Naive thymus-derived CD4-positive, alpha-beta T cell (primary cell): ENCODE measurements at regions of chr2 and their contacts with region 1.

Region 1: DNA sequence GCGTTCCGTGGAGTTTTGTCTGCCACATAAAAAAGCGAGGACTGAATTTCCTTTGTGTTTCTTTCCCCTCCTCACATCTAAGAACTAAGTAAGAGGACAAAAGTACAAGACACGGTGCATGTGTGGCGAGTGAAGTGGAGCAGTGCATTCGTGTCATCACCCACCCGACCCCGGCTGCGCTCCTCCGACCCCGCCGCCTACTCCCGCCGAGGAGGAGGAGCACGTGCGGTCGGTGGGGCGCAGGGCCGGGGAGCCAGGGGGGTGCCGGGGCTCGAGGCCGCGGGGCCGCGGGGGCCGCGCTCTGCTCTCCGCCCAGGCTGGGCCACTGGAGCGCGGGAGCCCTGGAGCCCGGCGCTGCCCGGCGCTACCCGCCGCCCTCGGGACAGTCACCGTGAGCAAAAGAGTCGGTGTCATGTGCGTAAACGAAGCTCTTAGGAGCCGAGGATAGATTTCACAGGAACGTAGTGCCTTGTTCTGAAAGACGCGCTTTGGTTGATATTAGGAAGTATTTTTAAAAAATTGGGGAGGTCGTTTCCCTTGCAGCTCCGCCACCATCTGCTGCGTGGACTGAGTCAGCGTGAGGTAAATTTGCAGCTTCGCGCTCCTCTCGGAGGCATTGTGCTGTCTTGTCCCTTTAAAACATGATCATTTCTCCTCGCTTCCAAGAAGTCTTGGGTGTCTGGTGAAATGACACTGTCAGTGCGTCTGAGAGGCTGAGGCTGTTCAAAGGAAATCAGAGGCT is 11.0 kb downstream of the TBR1 start:
- DNase-seq: peak in 1 of 9 donors; percentile 36
- ATAC-seq: peak; percentile 19
- H3K4me3 ChIP-seq: peak overlapping the region; percentile 8
- H3K4me3 Mint-ChIP-seq: peak overlapping the region; percentile 44 to 82 (median 72)
- H3K27ac ChIP-seq: no peak overlapping the region
- H3K27ac Mint-ChIP-seq: peak overlapping the region in 1 of 9 donors; percentile 68
- H3K4me1 ChIP-seq: peaks cover 5 to 21% of the 10 kb centered on the region in 2 donors
- H3K4me1 Mint-ChIP-seq: peaks cover 14 to 44% (median 31%) of the 10 kb centered on the region in 7 donors
- H3K27me3 ChIP-seq: peaks cover 27 to 70% of the 10 kb centered on the region in 2 donors
- H3K27me3 Mint-ChIP-seq: peaks cover 74 to 89% (median 82%) of the 10 kb centered on the region in 5 donors

Region 2: GRCh38 chr2:161265874-161266273 is 161.2 kb before region 1 on chr2:
- CTCF ChIA-PET with region 1: no interaction called
- POLR2A ChIA-PET with region 1: no interaction called
- intact Hi-C with region 1: no loop called
- DNase-seq: no peak
- ATAC-seq: no peak
- H3K4me3 ChIP-seq: no peak overlapping the region
- H3K4me3 Mint-ChIP-seq: no peak overlapping the region
- H3K27ac ChIP-seq: no peak overlapping the region
- H3K27ac Mint-ChIP-seq: no peak overlapping the region
- H3K4me1 ChIP-seq: no peaks in the 10 kb centered on the region
- H3K4me1 Mint-ChIP-seq: no peaks in the 10 kb centered on the region
- H3K27me3 ChIP-seq: no peaks in the 10 kb centered on the region
- H3K27me3 Mint-ChIP-seq: peaks cover 0 to 29% (median 4%) of the 10 kb centered on the region in 5 donors

Region 3: GRCh38 chr2:161414042-161415033 is 12.8 kb before region 1 on chr2:
- CTCF ChIA-PET with region 1: no interaction called
- POLR2A ChIA-PET with region 1: interaction called, 4 read pairs
- intact Hi-C with region 1: loop called (anchors 1 kb)
- DNase-seq: peak in 1 of 9 donors; percentile 33
- ATAC-seq: peak; percentile 63
- H3K4me3 ChIP-seq: peak overlapping the region; percentile 43
- H3K4me3 Mint-ChIP-seq: peak overlapping the region; percentile 54 to 84 (median 74)
- H3K27ac ChIP-seq: no peak overlapping the region
- H3K27ac Mint-ChIP-seq: peak overlapping the region in 1 of 9 donors; percentile 32
- H3K4me1 ChIP-seq: peaks cover 23 to 31% of the 10 kb centered on the region in 2 donors
- H3K4me1 Mint-ChIP-seq: peaks cover 30 to 52% (median 50%) of the 10 kb centered on the region in 7 donors
- H3K27me3 ChIP-seq: peaks cover 7 to 38% of the 10 kb centered on the region in 2 donors
- H3K27me3 Mint-ChIP-seq: peaks cover 52 to 56% (median 53%) of the 10 kb centered on the region in 5 donors

Region 4: DNA sequence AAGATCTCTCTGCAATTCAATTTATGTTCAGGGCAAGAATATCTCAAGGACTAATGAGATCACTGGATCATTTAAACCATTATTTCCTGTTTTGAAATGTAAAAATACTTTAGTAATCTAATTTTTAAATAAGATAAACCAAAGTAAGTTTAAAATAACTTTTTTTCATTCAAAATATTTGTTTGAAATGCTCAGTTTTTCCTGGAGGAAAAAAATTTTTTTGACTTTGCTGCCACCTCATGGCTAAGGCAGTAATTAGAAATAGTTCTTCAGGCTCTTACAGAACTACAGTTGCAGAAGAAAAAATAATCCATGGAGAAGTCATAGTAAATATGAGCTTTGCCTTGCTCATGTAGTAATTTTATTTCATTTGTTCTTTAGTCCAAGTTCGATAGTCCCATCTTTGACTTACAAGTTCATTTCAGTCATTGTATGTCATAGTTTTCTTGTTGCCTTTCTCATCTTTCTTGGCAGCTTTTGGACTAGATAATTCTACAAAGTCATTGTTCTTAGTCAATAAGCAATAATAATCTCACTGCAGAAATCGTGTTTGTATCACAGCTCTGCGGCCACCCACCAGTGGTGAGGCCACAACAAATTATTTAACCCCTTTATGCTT is 519.5 kb after region 1 on chr2:
- CTCF ChIA-PET with region 1: no interaction called
- POLR2A ChIA-PET with region 1: no interaction called
- intact Hi-C with region 1: loop called in 1 of 2 experiments (anchors 5 kb)
- DNase-seq: peak in 4 of 9 donors; percentile 18 to 38 (median 28)
- ATAC-seq: no peak
- H3K4me3 ChIP-seq: no peak overlapping the region
- H3K4me3 Mint-ChIP-seq: no peak overlapping the region
- H3K27ac ChIP-seq: no peak overlapping the region
- H3K27ac Mint-ChIP-seq: no peak overlapping the region
- H3K4me1 ChIP-seq: peaks cover 0 to 9% of the 10 kb centered on the region in 2 donors
- H3K4me1 Mint-ChIP-seq: peaks cover 0 to 36% (median 3%) of the 10 kb centered on the region in 7 donors
- H3K27me3 ChIP-seq: no peaks in the 10 kb centered on the region
- H3K27me3 Mint-ChIP-seq: peaks cover 0 to 20% (median 0%) of the 10 kb centered on the region in 5 donors

Region 5: GRCh38 chr2:162073888-162074645 is 647.0 kb after region 1 on chr2 and contains the start of gene DPP4:
- CTCF ChIA-PET with region 1: no interaction called
- POLR2A ChIA-PET with region 1: no interaction called
- intact Hi-C with region 1: loop called in 1 of 2 experiments (anchors 5 kb)
- DNase-seq: peak; percentile 31 to 68 (median 61)
- ATAC-seq: peak; percentile 88
- H3K4me3 ChIP-seq: peak within 1 kb of the TSS; percentile 95
- H3K4me3 Mint-ChIP-seq: peak within 1 kb of the TSS; percentile 92 to 100 (median 98)
- H3K27ac ChIP-seq: peak within 1 kb of the TSS; percentile 84
- H3K27ac Mint-ChIP-seq: peak within 1 kb of the TSS; percentile 86 to 98 (median 94)
- H3K4me1 ChIP-seq: peaks cover 0 to 28% of the 10 kb centered on the region in 2 donors
- H3K4me1 Mint-ChIP-seq: peaks cover 30 to 60% (median 52%) of the 10 kb centered on the region in 7 donors
- H3K27me3 ChIP-seq: no peaks in the 10 kb centered on the region
- H3K27me3 Mint-ChIP-seq: peaks cover 0 to 5% (median 0%) of the 10 kb centered on the region in 5 donors
- total RNA-seq, gene DPP4: 35.7 to 188 (median 41.6) TPM

Region 6: DNA sequence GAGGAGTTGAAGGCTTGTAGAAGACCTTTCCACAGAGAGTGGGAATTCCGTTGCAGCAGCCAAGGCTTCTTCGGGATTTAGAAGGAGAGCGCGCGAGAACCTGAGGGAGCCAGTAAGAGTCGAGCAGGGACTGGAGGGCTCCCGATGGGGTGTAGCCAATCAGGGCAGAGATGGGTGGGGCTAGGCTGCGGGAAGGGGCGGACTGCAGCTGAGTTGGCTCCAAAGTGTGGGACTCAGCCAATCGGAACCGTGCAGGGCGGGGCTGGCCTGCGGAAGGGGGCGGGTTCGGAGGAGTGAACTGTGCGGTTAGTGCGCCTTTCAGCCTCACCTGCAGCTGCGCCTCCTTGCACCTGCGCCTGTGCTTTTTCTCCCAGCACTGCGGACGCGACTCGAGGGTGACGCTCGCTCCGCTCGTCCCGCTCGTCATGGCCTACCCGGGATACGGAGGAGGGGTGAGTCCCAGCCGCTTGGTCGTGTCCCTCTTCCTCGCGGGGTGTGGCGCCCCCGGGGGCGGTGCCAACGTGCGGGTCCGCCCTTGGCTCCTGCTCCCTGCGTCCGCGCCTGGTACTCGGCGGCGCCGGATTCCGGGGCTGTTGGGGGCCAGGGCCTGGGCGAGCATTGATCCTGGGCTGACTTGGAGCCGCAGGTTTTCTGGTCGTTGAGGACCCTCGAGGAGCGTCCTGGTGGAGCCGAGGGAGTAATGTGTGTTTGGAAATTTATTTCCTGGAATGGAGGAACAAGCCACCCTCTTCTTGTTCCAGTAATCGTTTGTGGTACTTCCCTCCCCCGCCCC is 916.9 kb after region 1 on chr2 and contains the start of gene GCA:
- CTCF ChIA-PET with region 1: no interaction called
- POLR2A ChIA-PET with region 1: no interaction called
- intact Hi-C with region 1: loop called in 1 of 2 experiments (anchors 10 kb)
- DNase-seq: peak; percentile 96 to 99 (median 98)
- ATAC-seq: peak; percentile 99
- H3K4me3 ChIP-seq: peak within 1 kb of the TSS; percentile 87
- H3K4me3 Mint-ChIP-seq: peak within 1 kb of the TSS; percentile 78 to 96 (median 91)
- H3K27ac ChIP-seq: peak within 1 kb of the TSS; percentile 53
- H3K27ac Mint-ChIP-seq: peak within 1 kb of the TSS; percentile 70 to 92 (median 81)
- H3K4me1 ChIP-seq: peaks cover 4 to 5% of the 10 kb centered on the region in 2 donors
- H3K4me1 Mint-ChIP-seq: peaks cover 0 to 21% (median 19%) of the 10 kb centered on the region in 7 donors
- H3K27me3 ChIP-seq: no peaks in the 10 kb centered on the region
- H3K27me3 Mint-ChIP-seq: peaks cover 0 to 9% (median 0%) of the 10 kb centered on the region in 5 donors
- total RNA-seq, gene GCA: 10.9 to 56.3 (median 13.4) TPM